ENCODE measurements at regions of chr21 and their contacts with region 1.

Region 1: DNA sequence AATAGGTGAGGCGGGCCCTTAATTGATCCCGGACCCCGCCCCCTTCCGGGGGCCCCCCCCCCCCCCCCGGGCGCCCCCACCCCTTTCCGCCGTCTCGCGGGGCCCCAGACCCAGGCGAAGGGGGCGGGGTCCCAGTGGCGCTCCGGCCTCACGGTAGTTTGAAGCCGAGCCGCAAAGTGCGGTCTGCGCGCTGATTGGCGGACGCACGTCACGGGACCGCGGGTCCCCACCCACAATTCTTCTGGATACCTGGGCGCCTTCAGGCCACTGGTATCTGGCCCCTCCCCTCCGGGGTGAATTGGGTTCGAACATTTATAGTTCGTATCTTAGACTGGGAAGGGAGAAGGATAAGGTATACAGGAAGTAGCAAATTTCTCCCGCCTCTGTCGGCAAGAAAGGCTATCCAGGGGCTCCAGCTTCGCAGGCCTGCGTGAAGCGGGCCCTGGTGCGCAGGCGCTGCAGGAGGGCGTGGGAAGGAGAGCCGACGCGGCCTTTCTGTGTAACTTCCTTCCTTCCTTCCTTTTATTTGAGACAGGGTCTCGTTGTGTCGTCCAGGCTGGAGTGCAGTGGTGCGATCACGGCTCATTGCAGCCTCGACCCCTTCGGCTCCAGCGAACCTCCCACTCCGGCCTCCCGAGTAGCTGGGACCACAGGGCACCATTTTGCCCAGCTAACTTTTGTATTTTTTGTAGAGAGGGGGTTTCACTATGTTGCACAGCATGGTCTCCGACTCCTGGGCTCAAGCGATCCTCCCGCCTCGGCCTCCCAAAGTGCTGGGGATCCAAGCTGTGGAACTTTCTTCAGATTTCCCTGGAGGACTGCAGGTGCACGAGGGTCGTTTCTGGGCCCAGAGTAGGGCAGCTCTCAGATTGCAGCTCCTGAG is 564 bp upstream of the HMGN1 start:
- DNase-seq: peak; percentile 84 to 97
- H3K4me3 ChIP-seq: peak overlapping the region; percentile 57 to 81 (median 68)
- H3K27ac ChIP-seq: peak overlapping the region; percentile 81
- H3K4me1 ChIP-seq: peaks cover 3 to 15% (median 9%) of the 10 kb centered on the region in 4 experiments; a peak in 6 of 7 replicates
- H3K27me3 ChIP-seq: no peaks in the 10 kb centered on the region
- CTCF ChIP-seq: no peak
- EP300 ChIP-seq: no peak
- POLR2A ChIP-seq: no peak; a peak in 2 of 3 replicates
- RAD21 ChIP-seq: no peak

Region 2: DNA sequence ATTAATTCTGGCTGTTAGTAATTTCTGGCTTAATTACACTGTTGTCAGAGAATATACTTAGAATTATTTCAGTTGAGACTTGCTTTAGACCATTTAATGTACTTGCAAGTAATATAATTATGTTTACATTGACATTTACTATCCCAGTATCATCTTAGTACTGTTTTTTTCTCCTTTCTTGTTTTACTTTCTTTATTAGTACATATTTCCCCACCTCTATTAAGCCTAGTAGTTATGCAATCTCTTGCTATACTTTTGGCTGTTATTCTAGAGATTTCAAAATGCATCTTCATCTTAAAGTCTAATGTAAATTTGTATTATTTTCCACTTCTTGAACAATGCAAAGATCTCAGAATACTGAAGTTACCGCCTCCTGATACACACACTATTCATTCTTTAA is 60.5 kb before region 1 on chr21:
- CTCF ChIA-PET with region 1: no interaction called
- POLR2A ChIA-PET with region 1: no interaction called
- DNase-seq: no peak
- H3K4me3 ChIP-seq: no peak overlapping the region
- H3K27ac ChIP-seq: no peak overlapping the region
- H3K4me1 ChIP-seq: no peaks in the 10 kb centered on the region
- H3K27me3 ChIP-seq: no peaks in the 10 kb centered on the region
- CTCF ChIP-seq: no peak
- EP300 ChIP-seq: no peak
- POLR2A ChIP-seq: no peak
- RAD21 ChIP-seq: no peak

Region 3: GRCh38 chr21:39326607-39327307 is 22.7 kb before region 1 on chr21:
- CTCF ChIA-PET with region 1: no interaction called
- POLR2A ChIA-PET with region 1: interaction called, 31 read pairs
- DNase-seq: no peak
- H3K4me3 ChIP-seq: no peak overlapping the region
- H3K27ac ChIP-seq: no peak overlapping the region
- H3K4me1 ChIP-seq: peaks cover 0 to 2% (median under 1%) of the 10 kb centered on the region in 4 experiments; a peak in 2 of 7 replicates
- H3K27me3 ChIP-seq: no peaks in the 10 kb centered on the region
- CTCF ChIP-seq: no peak
- EP300 ChIP-seq: no peak
- POLR2A ChIP-seq: no peak
- RAD21 ChIP-seq: no peak

Region 4: GRCh38 chr21:39363607-39364555 is 14.4 kb after region 1 on chr21:
- CTCF ChIA-PET with region 1: interaction called, 3 read pairs
- POLR2A ChIA-PET with region 1: interaction called, 14 read pairs
- DNase-seq: no peak
- H3K4me3 ChIP-seq: no peak overlapping the region
- H3K27ac ChIP-seq: no peak overlapping the region
- H3K4me1 ChIP-seq: no peaks in the 10 kb centered on the region
- H3K27me3 ChIP-seq: no peaks in the 10 kb centered on the region
- CTCF ChIP-seq: no peak
- EP300 ChIP-seq: no peak
- POLR2A ChIP-seq: no peak
- RAD21 ChIP-seq: no peak

Region 5: DNA sequence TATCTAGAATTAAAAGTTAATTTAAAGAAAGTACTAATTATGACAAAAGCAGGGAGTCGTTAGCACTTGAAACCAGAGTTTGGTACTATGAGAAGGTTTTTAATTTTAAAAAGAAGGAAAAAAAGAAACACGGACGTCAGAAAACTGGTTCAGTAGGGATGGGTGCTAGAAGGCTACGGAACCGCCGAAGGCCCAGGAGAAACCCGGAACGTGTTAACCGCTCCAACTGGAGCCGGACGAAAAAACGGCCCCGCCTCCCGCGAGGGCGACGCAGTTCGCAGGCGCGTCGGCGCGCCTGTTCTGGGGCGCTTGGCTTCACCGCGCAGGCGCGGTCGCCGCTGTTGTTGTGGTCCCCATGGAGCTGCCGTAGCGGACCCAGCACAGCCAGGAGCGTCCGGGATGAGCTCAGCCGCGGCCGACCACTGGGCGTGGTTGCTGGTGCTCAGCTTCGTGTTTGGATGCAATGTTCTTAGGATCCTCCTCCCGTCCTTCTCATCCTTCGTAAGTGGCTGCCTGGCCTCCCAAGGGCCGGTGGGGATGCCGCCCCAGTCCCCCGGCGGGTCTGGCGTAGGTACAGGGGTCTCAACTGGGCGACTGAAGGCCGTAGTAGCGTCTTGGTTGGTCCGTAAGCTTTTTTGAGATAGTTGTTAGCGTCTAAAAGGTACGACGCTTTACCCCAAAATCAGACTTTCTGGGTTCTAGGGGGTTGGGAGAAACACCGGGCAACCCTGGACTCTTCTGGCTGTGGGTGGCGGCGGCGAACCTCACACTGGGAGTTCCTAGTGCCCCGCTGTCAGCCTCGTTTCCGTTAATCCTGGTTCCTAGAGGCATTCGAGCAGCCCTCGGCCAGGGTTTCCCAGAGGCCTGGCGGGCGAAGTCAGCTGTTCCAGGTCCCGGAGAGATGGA is 30.8 kb after region 1 on chr21:
- CTCF ChIA-PET with region 1: interaction called, 4 read pairs
- POLR2A ChIA-PET with region 1: interaction called, 40 read pairs
- DNase-seq: peak; percentile 85 to 94
- H3K4me3 ChIP-seq: peak overlapping the region; percentile 61 to 85 (median 77)
- H3K27ac ChIP-seq: peak overlapping the region; percentile 8; the same call in 1 of the 2 replicates
- H3K4me1 ChIP-seq: peaks cover 3 to 5% (median 4%) of the 10 kb centered on the region in 4 experiments; a peak in 6 of 7 replicates
- H3K27me3 ChIP-seq: no peaks in the 10 kb centered on the region
- CTCF ChIP-seq: no peak
- EP300 ChIP-seq: no peak
- POLR2A ChIP-seq: no peak
- RAD21 ChIP-seq: no peak